ENCODE measurements at regions of chr16 and their contacts with region 1.

Region 1: GRCh38 chr16:24036614-24037013 is 200.8 kb downstream of the PRKCB start:
- DNase-seq: peak in 1 of 5 donors; percentile 13
- ATAC-seq: peak in 3 of 4 donors; percentile 58 to 69 (median 64)
- H3K4me3 ChIP-seq: no peak overlapping the region
- H3K27ac ChIP-seq: no peak overlapping the region
- H3K4me1 ChIP-seq: peaks cover 0 to 4% (median 0%) of the 10 kb centered on the region in 12 donors
- H3K27me3 ChIP-seq: peaks cover 0 to 43% (median 2%) of the 10 kb centered on the region in 9 donors
- CTCF ChIP-seq: peak; percentile 44 to 72 (median 59)
- POLR2A ChIP-seq: no peak

Region 2: GRCh38 chr16:23704772-23705516 is 331.7 kb before region 1 on chr16:
- intact Hi-C with region 1: no loop called
- DNase-seq: no peak
- ATAC-seq: no peak
- H3K4me3 ChIP-seq: no peak overlapping the region
- H3K27ac ChIP-seq: no peak overlapping the region
- H3K4me1 ChIP-seq: no peaks in the 10 kb centered on the region
- H3K27me3 ChIP-seq: peaks cover 0 to 17% (median 3%) of the 10 kb centered on the region in 9 donors
- CTCF ChIP-seq: no peak
- POLR2A ChIP-seq: no peak

Region 3: DNA sequence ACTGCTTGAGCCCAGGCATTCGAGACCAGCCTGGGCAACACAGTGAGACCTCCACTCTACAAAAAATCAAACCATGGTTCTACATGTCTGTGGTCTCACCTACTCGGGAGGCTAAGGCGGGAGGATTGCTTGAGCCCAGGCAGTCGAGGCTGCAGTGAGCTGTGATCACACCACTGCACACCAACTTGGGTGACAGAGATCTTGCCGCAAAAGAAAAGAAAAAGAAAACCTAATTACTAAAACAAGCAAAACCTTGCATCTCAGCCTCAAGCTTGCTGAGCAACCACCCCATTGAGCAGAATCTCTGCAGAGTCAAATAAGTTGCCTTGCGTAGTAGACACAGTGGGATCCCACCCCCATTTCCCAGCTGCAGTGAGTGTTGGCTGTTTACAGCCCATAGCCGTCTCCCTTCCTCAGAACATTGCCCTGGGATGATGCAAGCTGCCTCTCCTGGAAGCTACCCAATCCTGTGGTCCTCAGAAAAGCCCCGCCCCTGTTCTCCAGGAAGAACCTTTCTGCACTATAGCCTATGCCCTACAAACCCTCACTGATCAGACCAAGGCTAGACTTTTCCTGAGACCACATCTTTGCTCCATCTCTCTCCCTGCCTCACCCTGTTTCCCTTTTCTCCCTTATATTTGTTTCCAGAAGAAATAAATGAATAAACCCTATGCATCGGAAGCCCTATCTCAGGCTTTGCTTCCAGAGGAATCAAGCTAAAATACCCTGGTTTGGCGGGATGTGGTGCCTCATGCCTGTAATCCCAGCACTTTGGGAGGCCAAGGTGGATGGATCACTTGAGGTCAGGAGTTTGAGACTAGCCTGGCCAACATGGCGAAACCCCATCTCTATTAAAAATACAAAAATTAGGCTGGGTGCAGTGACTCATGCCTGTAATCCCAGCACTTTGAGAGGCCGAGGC is 306.9 kb before region 1 on chr16:
- intact Hi-C with region 1: loop called in 2 of 10 experiments (anchors 2 to 10 kb)
- DNase-seq: no peak
- ATAC-seq: no peak
- H3K4me3 ChIP-seq: no peak overlapping the region
- H3K27ac ChIP-seq: no peak overlapping the region
- H3K4me1 ChIP-seq: peaks cover 0 to 4% (median 0%) of the 10 kb centered on the region in 12 donors
- H3K27me3 ChIP-seq: peaks cover 0 to 7% (median 0%) of the 10 kb centered on the region in 9 donors
- CTCF ChIP-seq: no peak
- POLR2A ChIP-seq: no peak

Region 4: DNA sequence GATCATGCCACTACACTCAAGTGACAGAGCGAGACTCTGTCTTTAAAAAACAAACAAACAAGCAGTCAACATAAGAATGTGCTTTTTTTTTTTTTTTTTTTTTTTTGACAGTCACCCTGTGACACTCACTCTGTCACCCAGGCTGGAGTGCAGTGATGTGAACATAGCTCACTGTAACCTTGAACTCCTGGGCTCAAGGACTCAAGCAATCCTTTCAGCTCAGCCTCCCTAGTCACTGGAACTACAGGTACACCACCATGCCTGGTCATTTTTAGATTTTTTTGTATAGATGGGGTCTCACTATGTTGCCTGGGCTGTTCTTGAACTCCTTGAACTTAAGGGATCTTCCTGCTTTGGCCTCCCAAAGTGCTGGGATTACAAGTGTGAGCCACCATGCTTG is 297.1 kb before region 1 on chr16:
- intact Hi-C with region 1: loop called in 4 of 10 experiments (anchors 2 to 10 kb)
- DNase-seq: no peak
- ATAC-seq: no peak
- H3K4me3 ChIP-seq: no peak overlapping the region
- H3K27ac ChIP-seq: no peak overlapping the region
- H3K4me1 ChIP-seq: no peaks in the 10 kb centered on the region
- H3K27me3 ChIP-seq: peaks cover 0 to 31% (median 0%) of the 10 kb centered on the region in 9 donors
- CTCF ChIP-seq: no peak
- POLR2A ChIP-seq: no peak

Region 5: GRCh38 chr16:23803591-23804123 is 233.0 kb before region 1 on chr16:
- intact Hi-C with region 1: loop called in 7 of 10 experiments (anchors 2 to 5 kb)
- DNase-seq: peak; percentile 23 to 74 (median 40)
- ATAC-seq: peak in 2 of 4 donors; percentile 39 to 67
- H3K4me3 ChIP-seq: no peak overlapping the region
- H3K27ac ChIP-seq: no peak overlapping the region
- H3K4me1 ChIP-seq: peaks cover 0 to 7% (median 0%) of the 10 kb centered on the region in 12 donors
- H3K27me3 ChIP-seq: peaks cover 0 to 38% (median 0%) of the 10 kb centered on the region in 9 donors
- CTCF ChIP-seq: peak in 11 of 12 donors; percentile 11 to 44 (median 37)
- POLR2A ChIP-seq: no peak

Region 6: DNA sequence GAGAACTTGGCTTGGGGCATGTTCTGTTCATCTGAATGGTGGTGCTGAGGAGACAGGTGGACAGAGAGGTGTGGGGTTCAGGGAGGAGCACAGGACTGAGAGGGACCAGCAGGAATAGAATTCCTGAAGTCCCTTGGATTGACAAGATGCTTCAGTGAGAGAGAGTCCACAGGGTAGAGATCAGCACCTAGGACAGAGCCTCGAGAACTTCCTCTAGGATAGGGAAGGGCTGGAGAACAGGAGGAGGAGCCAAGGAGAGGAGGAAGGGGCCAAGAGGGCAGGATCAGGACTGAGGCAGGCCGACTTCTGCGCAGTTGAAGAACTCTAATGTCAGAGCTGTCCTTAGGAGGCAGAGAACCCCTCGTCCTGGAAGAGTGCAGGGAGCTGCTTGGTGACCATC is 62.4 kb before region 1 on chr16:
- intact Hi-C with region 1: loop called in 1 of 10 experiments (anchors 10 kb)
- DNase-seq: no peak
- ATAC-seq: no peak
- H3K4me3 ChIP-seq: no peak overlapping the region
- H3K27ac ChIP-seq: no peak overlapping the region
- H3K4me1 ChIP-seq: no peaks in the 10 kb centered on the region
- H3K27me3 ChIP-seq: peaks cover 0 to 6% (median 0%) of the 10 kb centered on the region in 9 donors
- CTCF ChIP-seq: no peak
- POLR2A ChIP-seq: no peak

Region 7: DNA sequence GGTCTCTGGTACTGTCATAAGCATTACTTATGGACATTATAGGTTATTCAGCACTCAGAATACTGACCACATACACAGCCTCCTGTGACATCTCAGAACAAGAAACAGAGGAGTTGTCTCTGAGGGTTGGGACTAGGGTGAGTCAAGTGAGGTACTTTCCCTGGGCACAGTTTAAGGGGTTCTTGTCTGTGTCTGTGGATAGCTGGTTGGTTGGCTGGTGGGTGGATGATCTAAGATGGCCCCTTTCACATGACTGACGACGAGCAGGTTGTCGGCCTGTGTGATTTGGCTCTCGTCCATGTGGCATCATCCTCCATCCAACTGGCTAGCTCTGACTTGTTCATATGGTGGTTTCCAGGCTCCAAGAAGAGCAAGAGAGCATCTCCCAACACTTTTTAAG is 37.0 kb before region 1 on chr16:
- intact Hi-C with region 1: no loop called
- DNase-seq: no peak
- ATAC-seq: no peak
- H3K4me3 ChIP-seq: no peak overlapping the region
- H3K27ac ChIP-seq: no peak overlapping the region
- H3K4me1 ChIP-seq: no peaks in the 10 kb centered on the region
- H3K27me3 ChIP-seq: peaks cover 0 to 8% (median 0%) of the 10 kb centered on the region in 9 donors
- CTCF ChIP-seq: no peak
- POLR2A ChIP-seq: no peak